ENCODE measurements at regions of chr22 and their contacts with region 1.

Region 1: DNA sequence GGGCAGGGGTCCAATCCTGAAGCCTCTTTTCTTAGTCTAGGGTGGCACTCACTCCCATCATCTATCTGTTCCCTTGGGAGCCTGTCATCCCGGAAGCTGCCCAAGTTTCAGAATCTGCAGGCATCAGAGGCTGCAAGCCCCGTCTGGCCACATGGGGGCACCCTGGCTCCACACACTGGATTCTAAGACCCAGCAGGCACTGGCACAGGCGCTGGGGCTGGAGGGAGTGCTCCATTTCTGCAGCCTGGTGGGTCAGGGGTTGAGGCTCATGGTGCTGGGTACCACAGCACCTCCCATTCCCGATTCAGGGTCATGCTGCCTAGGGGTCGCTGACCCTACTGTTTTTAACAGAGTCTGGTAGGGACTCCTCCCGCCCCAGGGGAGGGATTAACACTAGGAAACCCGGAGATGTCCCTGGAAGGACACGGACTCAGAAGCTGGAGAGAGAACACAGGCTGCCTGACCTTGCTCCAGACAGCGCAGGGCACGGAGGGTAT is 243.9 kb upstream of the SYN3 start:
- DNase-seq: peak; percentile 59 to 95
- H3K4me3 ChIP-seq: no peak overlapping the region
- CTCF ChIP-seq: peak in 1 of 3 donors; percentile 70
- POLR2A ChIP-seq: no peak

Region 2: GRCh38 chr22:32810561-32811004 is 491.5 kb before region 1 on chr22:
- intact Hi-C with region 1: no loop called
- DNase-seq: no peak
- H3K4me3 ChIP-seq: no peak overlapping the region
- CTCF ChIP-seq: no peak
- POLR2A ChIP-seq: no peak

Region 3: GRCh38 chr22:35150183-35151107 is 1848.3 kb after region 1 on chr22:
- intact Hi-C with region 1: loop called (anchors 10 kb)
- DNase-seq: peak; percentile 28 to 88
- H3K4me3 ChIP-seq: no peak overlapping the region
- CTCF ChIP-seq: no peak
- POLR2A ChIP-seq: no peak

Measured in lower leg skin (tissue), 4 donors.